ENCODE measurements at regions of chr2 and their contacts with region 1.

Region 1: GRCh38 chr2:217510771-217511291 is 492.0 kb downstream of the TNS1 start:
- DNase-seq: peak; percentile 27
- ATAC-seq: peak; percentile 87
- H3K4me3 ChIP-seq: no peak overlapping the region
- H3K27ac ChIP-seq: no peak overlapping the region
- H3K4me1 ChIP-seq: no peaks in the 10 kb centered on the region
- H3K27me3 ChIP-seq: no peaks in the 10 kb centered on the region
- CTCF ChIP-seq: peak; percentile 68 to 79 (median 78); a peak in 5 of 6 replicates
- EP300 ChIP-seq: no peak
- POLR2A ChIP-seq: no peak
- RAD21 ChIP-seq: peak; percentile 97

Region 2: GRCh38 chr2:216683846-216684507 is 826.9 kb before region 1 on chr2:
- CTCF ChIA-PET with region 1: interaction called, 6 read pairs
- POLR2A ChIA-PET with region 1: no interaction called
- RAD21 ChIA-PET with region 1: no interaction called
- SMC1A ChIA-PET with region 1: interaction called, 3 read pairs
- in situ Hi-C with region 1: loop called (anchors 5 kb)
- intact Hi-C with region 1: loop called (anchors 1 kb)
- DNase-seq: no peak
- ATAC-seq: no peak
- H3K4me3 ChIP-seq: no peak overlapping the region
- H3K27ac ChIP-seq: no peak overlapping the region
- H3K4me1 ChIP-seq: no peaks in the 10 kb centered on the region
- H3K27me3 ChIP-seq: no peaks in the 10 kb centered on the region; a peak in 2 of 4 replicates
- CTCF ChIP-seq: no peak
- EP300 ChIP-seq: no peak
- POLR2A ChIP-seq: no peak
- RAD21 ChIP-seq: no peak

Region 3: GRCh38 chr2:216777650-216778273 is 733.1 kb before region 1 on chr2:
- CTCF ChIA-PET with region 1: no interaction called
- POLR2A ChIA-PET with region 1: no interaction called
- RAD21 ChIA-PET with region 1: no interaction called
- SMC1A ChIA-PET with region 1: no interaction called
- in situ Hi-C with region 1: no loop called
- intact Hi-C with region 1: loop called (anchors 1 kb)
- DNase-seq: peak; percentile 27
- ATAC-seq: peak; percentile 100
- H3K4me3 ChIP-seq: no peak overlapping the region
- H3K27ac ChIP-seq: no peak overlapping the region
- H3K4me1 ChIP-seq: no peaks in the 10 kb centered on the region
- H3K27me3 ChIP-seq: peaks cover 0 to 4% of the 10 kb centered on the region in 2 experiments; a peak in 1 of 4 replicates
- CTCF ChIP-seq: peak; percentile 74 to 87 (median 82)
- EP300 ChIP-seq: no peak
- POLR2A ChIP-seq: no peak
- RAD21 ChIP-seq: peak; percentile 63

Region 4: GRCh38 chr2:217000404-217000803 is 510.4 kb before region 1 on chr2:
- CTCF ChIA-PET with region 1: no interaction called
- POLR2A ChIA-PET with region 1: no interaction called
- RAD21 ChIA-PET with region 1: no interaction called
- SMC1A ChIA-PET with region 1: no interaction called
- in situ Hi-C with region 1: no loop called
- intact Hi-C with region 1: loop called (anchors 5 kb)
- DNase-seq: no peak
- ATAC-seq: peak; percentile 67; the same call in 2 of the 3 replicates
- H3K4me3 ChIP-seq: no peak overlapping the region
- H3K27ac ChIP-seq: no peak overlapping the region
- H3K4me1 ChIP-seq: no peaks in the 10 kb centered on the region
- H3K27me3 ChIP-seq: no peaks in the 10 kb centered on the region
- CTCF ChIP-seq: peak in 1 of 3 experiments; percentile 38; a peak in 2 of 6 replicates
- EP300 ChIP-seq: no peak
- POLR2A ChIP-seq: no peak
- RAD21 ChIP-seq: peak; percentile 65

Region 5: GRCh38 chr2:217489145-217489960 is 21.5 kb before region 1 on chr2:
- CTCF ChIA-PET with region 1: no interaction called
- POLR2A ChIA-PET with region 1: no interaction called
- RAD21 ChIA-PET with region 1: no interaction called
- SMC1A ChIA-PET with region 1: no interaction called
- in situ Hi-C with region 1: no loop called
- intact Hi-C with region 1: no loop called
- DNase-seq: no peak
- ATAC-seq: no peak
- H3K4me3 ChIP-seq: no peak overlapping the region
- H3K27ac ChIP-seq: no peak overlapping the region
- H3K4me1 ChIP-seq: no peaks in the 10 kb centered on the region
- H3K27me3 ChIP-seq: peaks cover 0 to 3% of the 10 kb centered on the region in 2 experiments; a peak in 2 of 4 replicates
- CTCF ChIP-seq: no peak
- EP300 ChIP-seq: no peak
- POLR2A ChIP-seq: no peak
- RAD21 ChIP-seq: no peak

Region 6: DNA sequence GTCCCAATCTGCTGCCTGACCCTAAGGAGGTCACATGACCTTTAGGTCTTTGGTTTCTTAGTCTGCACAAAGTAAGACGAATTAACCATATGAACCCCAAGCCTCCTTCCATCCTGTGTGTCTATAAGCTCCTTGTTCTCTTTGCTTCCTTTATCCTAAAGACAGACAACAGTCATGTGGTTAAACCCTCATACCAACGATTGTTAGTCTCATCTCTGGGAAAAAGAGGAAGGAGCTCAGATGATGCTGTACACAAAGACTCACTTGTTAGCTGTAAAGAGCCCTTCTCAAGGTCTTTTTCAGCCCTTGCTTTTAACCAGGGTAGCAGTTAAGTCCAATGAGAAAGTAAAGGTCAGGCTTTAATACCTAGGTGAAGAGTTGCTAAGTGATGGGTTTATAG is 48.3 kb after region 1 on chr2:
- CTCF ChIA-PET with region 1: no interaction called
- POLR2A ChIA-PET with region 1: no interaction called
- RAD21 ChIA-PET with region 1: no interaction called
- SMC1A ChIA-PET with region 1: no interaction called
- in situ Hi-C with region 1: no loop called
- intact Hi-C with region 1: no loop called
- DNase-seq: no peak
- ATAC-seq: no peak
- H3K4me3 ChIP-seq: no peak overlapping the region
- H3K27ac ChIP-seq: no peak overlapping the region
- H3K4me1 ChIP-seq: no peaks in the 10 kb centered on the region
- H3K27me3 ChIP-seq: peaks cover 0 to 2% of the 10 kb centered on the region in 2 experiments; a peak in 2 of 4 replicates
- CTCF ChIP-seq: no peak
- EP300 ChIP-seq: no peak
- POLR2A ChIP-seq: no peak
- RAD21 ChIP-seq: no peak

Region 7: GRCh38 chr2:217713395-217714286 is 202.8 kb after region 1 on chr2:
- CTCF ChIA-PET with region 1: interaction called, 12 read pairs
- POLR2A ChIA-PET with region 1: no interaction called
- RAD21 ChIA-PET with region 1: no interaction called
- SMC1A ChIA-PET with region 1: no interaction called
- in situ Hi-C with region 1: no loop called
- intact Hi-C with region 1: loop called (anchors 2 kb)
- DNase-seq: no peak
- ATAC-seq: peak; percentile 91
- H3K4me3 ChIP-seq: no peak overlapping the region
- H3K27ac ChIP-seq: no peak overlapping the region
- H3K4me1 ChIP-seq: no peaks in the 10 kb centered on the region
- H3K27me3 ChIP-seq: peaks cover 2 to 3% of the 10 kb centered on the region in 2 experiments; a peak in 3 of 4 replicates
- CTCF ChIP-seq: peak; percentile 81 to 96 (median 91)
- EP300 ChIP-seq: no peak
- POLR2A ChIP-seq: no peak
- RAD21 ChIP-seq: peak; percentile 95